ENCODE measurements at regions of chr1 and their contacts with region 1.

Region 1: GRCh38 chr1:193059268-193060225 is at the starts of genes RO60 and UCHL5:
- DNase-seq: peak; percentile 97
- ATAC-seq: peak; percentile 97
- H3K4me3 Mint-ChIP-seq: peak within 1 kb of the TSS; percentile 97
- H3K27ac Mint-ChIP-seq: peak within 1 kb of the TSS; percentile 98
- H3K4me1 Mint-ChIP-seq: peaks cover 53% of the 10 kb centered on the region
- H3K27me3 Mint-ChIP-seq: no peaks in the 10 kb centered on the region
- total RNA-seq, gene RO60: 53.8 to 57.4 TPM
- total RNA-seq, gene UCHL5: 61.1 to 64.4 TPM

Region 2: DNA sequence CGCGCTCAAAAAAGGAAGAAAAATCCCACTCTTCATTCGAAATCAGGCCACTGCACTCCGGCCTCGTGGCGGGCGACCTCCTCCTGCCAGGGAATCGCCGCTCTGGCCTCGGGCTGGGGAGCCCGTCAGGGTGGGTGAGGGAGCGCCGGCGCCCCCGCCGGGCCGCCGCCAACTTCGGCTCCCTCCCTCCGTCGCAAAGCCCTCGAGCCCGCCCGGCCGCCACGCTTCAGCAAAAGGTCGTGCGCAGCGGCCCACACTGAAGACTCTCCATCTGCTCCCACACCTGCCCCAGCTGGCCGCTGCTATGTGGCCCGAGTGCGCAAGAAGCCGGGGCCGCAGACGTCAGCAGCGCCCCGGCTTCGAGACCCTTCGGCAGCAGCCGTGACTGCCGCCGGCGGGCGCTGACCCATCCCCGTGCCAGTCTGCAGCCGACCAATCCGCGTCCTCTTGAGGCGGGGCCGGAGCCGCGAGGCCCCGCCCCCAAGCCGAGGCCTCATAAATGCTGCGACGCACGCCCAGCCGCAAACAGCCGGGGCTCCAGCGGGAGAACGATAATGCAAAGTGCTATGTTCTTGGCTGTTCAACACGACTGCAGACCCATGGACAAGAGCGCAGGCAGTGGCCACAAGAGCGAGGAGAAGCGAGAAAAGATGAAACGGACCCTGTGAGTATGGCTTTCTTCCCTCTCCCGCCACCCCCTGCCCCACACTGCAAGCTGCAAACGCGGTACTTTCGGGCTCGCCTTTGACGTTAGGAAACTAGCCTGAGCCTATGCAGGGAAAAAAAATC is 250.8 kb before region 1 on chr1 and contains the start of gene RGS2:
- CTCF ChIA-PET with region 1: interaction called, 17 read pairs
- POLR2A ChIA-PET with region 1: interaction called, 21 read pairs
- DNase-seq: peak; percentile 89
- ATAC-seq: peak; percentile 94
- H3K4me3 Mint-ChIP-seq: peak within 1 kb of the TSS; percentile 87
- H3K27ac Mint-ChIP-seq: peak within 1 kb of the TSS; percentile 87
- H3K4me1 Mint-ChIP-seq: peaks cover 26% of the 10 kb centered on the region
- H3K27me3 Mint-ChIP-seq: peaks cover 12% of the 10 kb centered on the region
- total RNA-seq, gene RGS2: 6.2 to 6.5 TPM

Region 3: DNA sequence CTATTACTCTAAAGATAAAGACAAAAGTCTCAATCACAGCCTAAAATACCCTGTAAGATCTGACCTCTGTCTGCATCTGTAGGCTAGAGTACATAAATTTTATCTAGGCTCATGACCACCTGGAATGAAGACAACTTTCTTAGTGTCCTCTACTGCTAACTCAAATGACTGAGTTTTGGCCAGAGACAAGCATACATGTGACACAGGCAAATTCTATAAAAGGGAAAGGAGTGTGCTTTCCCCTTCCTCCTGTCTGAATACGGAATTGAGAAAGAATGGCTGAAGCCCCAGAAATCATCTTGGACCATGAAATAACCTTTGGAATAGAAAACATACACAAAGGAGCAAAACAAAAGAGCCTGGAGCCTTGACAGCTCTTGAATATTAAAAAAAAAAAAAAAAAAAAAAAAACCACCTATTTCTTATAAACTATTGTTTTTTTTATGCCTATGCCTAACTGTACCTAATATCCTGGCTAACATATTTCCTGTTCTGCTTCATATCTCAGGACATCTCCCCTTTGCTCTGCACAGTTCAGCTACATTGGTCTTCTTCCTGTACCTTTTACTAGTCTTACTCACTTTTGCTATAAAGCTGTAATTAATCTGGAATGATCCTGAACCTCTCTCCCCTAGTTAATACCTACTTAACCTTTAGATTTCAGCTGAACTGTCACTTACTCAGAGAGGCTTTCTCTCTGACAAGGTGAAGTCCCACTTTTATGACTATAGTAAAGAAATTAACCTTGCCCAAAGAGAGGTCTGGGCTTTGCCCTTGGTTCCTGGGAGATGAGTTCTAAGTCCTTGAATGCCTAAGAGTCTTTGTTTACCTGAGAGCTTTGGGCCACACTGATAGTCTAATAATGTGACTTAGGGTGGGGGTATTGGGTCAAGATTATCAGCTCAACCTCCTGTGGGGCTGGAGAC is 16.5 kb before region 1 on chr1:
- CTCF ChIA-PET with region 1: interaction called, 10 read pairs
- POLR2A ChIA-PET with region 1: interaction called, 13 read pairs
- DNase-seq: no peak
- ATAC-seq: no peak
- H3K4me3 Mint-ChIP-seq: no peak overlapping the region
- H3K27ac Mint-ChIP-seq: no peak overlapping the region
- H3K4me1 Mint-ChIP-seq: no peaks in the 10 kb centered on the region
- H3K27me3 Mint-ChIP-seq: no peaks in the 10 kb centered on the region

Region 4: DNA sequence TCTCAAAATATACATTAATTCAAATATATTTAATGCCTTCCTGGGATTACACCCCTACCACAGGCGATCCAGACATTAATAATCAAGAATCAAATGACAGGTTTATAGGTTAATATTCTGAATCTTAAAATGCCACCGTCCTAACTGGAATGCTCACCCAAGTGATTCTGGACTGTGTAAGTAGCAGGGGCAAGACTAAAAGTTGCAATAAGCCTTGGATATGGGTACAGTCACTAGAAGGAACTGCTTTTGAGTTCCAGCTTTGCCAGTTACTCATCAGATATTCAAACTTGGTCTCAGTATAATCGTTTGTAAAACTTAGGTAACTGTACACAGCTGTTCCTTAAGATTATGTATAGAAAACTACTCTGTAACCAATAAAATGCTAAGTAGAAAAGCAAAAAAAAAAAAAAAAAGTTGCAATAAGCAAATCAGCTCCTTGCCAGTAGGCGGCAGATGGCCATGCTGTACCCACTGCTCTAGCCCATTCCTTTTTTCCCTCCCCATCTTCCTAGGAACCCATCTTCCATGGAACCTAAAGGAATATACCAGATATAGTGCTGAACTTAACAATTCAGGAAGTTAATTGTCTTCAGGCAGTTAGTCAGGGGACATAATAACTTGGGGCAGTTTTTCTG is 10.3 kb after region 1 on chr1:
- CTCF ChIA-PET with region 1: interaction called, 10 read pairs
- POLR2A ChIA-PET with region 1: interaction called, 11 read pairs
- DNase-seq: no peak
- ATAC-seq: peak; percentile 34
- H3K4me3 Mint-ChIP-seq: peak overlapping the region; percentile 30
- H3K27ac Mint-ChIP-seq: peak overlapping the region; percentile 65
- H3K4me1 Mint-ChIP-seq: peaks cover 22% of the 10 kb centered on the region
- H3K27me3 Mint-ChIP-seq: no peaks in the 10 kb centered on the region

Region 5: DNA sequence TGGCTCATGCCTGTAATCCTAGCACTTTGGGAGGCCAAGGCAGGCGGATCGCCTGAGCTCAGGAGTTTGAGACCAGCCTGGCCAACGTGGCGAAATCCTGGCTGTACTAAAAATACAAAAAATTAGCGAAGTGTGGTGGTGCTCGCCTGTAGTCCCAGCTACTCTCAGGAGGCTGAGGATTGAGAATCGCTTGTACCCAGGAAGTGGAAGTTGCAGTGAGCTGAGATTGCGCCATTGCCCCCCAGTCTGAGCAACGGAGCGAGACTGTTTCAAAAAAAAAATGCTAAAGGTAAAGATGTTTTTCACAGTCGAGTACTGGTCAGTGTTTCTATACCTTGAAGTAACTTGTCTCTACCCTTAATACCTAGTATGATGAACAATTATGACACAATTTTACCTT is 34.6 kb after region 1 on chr1:
- CTCF ChIA-PET with region 1: no interaction called
- POLR2A ChIA-PET with region 1: no interaction called
- DNase-seq: no peak
- ATAC-seq: no peak
- H3K4me3 Mint-ChIP-seq: no peak overlapping the region
- H3K27ac Mint-ChIP-seq: no peak overlapping the region
- H3K4me1 Mint-ChIP-seq: no peaks in the 10 kb centered on the region
- H3K27me3 Mint-ChIP-seq: no peaks in the 10 kb centered on the region

Region 6: DNA sequence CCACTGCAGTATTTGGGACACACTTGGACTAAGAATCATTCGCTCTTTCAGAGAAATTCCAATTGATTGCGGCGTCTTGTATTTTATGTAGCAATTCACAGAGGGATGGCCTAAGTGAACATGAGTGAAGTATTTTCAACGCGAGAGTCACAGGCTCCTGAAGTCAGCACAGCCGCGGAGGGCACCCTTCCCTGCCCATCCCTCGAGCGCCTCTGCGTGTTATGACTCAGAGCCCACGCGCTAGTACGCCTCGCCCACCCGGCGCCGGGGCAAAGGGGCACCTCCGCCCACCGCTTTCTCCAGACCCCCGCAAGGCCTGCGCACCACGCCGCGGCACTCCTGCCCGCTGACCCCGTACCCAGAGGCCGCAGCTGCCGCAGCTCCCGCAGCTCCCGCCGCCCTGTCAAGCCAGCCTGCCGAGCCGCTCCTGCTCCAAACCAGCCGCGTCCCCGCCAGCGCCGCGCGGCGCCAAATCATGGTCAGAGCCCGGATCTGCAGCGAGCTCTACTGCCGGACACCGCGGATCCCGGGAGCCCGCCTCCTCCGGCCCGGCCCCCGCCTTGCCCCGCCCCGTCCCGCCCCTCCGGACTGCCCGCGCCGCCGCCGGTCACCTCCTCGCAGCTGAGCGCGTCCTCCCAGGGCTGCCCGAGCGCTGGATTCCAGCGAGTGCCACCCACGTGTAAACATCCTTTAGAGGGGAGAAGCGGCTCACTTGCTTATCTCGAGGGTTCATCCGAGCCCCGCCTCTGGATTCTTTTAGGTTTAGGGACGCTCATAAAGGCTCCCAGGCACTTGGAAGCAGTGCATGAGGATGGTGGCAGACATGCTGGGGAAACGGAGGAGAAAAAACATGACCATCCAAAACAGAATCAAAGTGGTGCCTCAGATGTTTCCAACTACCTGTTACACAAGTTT is 45.6 kb after region 1 on chr1 and contains the start of gene GLRX2:
- CTCF ChIA-PET with region 1: no interaction called
- POLR2A ChIA-PET with region 1: interaction called, 13 read pairs
- DNase-seq: peak; percentile 70
- ATAC-seq: peak; percentile 94
- H3K4me3 Mint-ChIP-seq: peak within 1 kb of the TSS; percentile 94
- H3K27ac Mint-ChIP-seq: peak within 1 kb of the TSS; percentile 78
- H3K4me1 Mint-ChIP-seq: peaks cover 18% of the 10 kb centered on the region
- H3K27me3 Mint-ChIP-seq: peaks cover 12% of the 10 kb centered on the region
- total RNA-seq, gene GLRX2: 18.7 to 21.8 TPM

Region 7: DNA sequence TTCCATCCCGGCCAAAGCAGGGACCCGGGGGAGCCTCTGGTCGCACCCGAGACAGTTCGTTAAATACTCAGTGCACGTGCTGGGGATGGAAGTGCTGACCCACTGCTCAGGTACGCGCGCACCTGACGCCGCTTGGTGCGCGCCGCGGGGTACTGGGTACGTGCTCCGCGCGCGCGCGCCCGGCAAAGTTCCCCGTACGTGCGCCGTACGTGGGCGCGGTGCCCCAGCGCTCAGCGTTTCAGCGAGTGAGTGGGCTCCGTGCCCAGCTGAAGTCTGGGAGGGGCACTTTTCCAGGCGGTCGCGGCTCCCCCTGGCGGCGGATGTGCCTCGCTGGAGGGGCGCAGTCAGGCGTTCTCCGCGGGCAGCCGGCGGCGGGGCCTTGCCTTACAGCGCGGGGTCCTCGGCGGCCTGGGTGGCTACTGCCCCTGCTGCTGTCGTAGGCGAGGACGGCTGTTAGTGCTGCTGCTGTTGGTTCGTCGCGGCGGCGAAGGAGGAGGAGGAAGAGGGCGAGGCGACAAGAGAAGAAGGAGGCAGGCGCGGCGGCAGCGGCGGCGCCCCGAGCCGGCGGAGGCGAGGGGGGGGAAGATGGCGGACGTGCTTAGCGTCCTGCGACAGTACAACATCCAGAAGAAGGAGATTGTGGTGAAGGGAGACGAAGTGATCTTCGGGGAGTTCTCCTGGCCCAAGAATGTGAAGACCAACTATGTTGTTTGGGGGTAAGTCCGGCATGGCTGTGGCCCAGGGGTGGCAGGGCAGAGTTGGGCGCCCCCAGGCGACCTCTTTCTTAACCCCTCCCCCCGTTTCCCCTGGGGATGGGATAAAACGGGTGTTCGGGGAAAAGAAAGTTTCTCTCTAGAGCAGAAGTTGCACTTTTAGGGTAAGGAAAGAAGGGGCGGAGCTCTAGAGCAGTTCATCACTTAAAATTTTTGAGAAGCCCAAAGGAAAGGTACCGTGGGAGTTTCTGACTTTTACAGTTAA is 62.4 kb after region 1 on chr1 and contains the start of gene CDC73:
- CTCF ChIA-PET with region 1: interaction called, 13 read pairs
- POLR2A ChIA-PET with region 1: interaction called, 20 read pairs
- DNase-seq: peak; percentile 97
- ATAC-seq: peak; percentile 98
- H3K4me3 Mint-ChIP-seq: peak within 1 kb of the TSS; percentile 99
- H3K27ac Mint-ChIP-seq: peak within 1 kb of the TSS; percentile 94
- H3K4me1 Mint-ChIP-seq: peaks cover 45% of the 10 kb centered on the region
- H3K27me3 Mint-ChIP-seq: peaks cover 14% of the 10 kb centered on the region
- total RNA-seq, gene CDC73: 51.8 to 53.8 TPM